Activated CD8-positive, alpha-beta T cell treated with anti-CD3 and anti-CD28 coated beads for 36 hours (primary cell): ENCODE measurements at regions of chr10 and their contacts with region 1.

Region 1: GRCh38 chr10:22988581-22989360 is 60.9 kb downstream of the ARMC3 start:
- DNase-seq: peak; percentile 79
- ATAC-seq: peak; percentile 80
- H3K4me3 Mint-ChIP-seq: no peak overlapping the region
- H3K27ac Mint-ChIP-seq: no peak overlapping the region
- H3K4me1 Mint-ChIP-seq: peaks cover 18% of the 10 kb centered on the region
- H3K27me3 Mint-ChIP-seq: no peaks in the 10 kb centered on the region
- CTCF ChIP-seq: peak; percentile 94

Region 2: GRCh38 chr10:21993360-21994001 is 995.3 kb before region 1 on chr10:
- CTCF ChIA-PET with region 1: interaction called, 35 read pairs
- POLR2A ChIA-PET with region 1: no interaction called
- intact Hi-C with region 1: no loop called
- DNase-seq: no peak
- ATAC-seq: peak; percentile 10
- H3K4me3 Mint-ChIP-seq: no peak overlapping the region
- H3K27ac Mint-ChIP-seq: no peak overlapping the region
- H3K4me1 Mint-ChIP-seq: peaks cover 16% of the 10 kb centered on the region
- H3K27me3 Mint-ChIP-seq: no peaks in the 10 kb centered on the region
- CTCF ChIP-seq: peak; percentile 72

Region 3: DNA sequence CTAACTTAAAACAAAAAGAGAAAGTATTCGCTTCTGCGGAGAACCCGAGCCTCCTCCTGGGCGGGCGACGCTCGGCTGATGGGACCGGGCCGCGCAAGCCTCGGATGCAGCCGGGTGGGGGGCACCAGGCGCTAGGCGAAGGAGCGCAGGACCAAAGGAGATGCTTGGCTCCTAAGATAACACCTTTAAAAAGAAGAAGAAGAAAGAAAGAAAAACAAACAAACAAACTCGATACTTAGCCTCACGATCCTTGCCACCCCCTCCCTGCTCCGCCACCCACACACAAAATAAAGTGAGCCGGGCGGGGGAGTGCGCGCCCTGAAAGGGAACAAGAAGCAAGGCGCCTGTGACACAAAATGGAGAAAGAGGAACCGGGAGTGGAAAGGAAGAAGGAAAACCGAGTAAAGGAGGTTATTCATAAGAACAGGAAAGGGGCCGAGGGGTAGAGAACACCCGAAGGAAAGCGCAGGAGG is 737.0 kb before region 1 on chr10:
- CTCF ChIA-PET with region 1: no interaction called
- POLR2A ChIA-PET with region 1: interaction called, 3 read pairs
- intact Hi-C with region 1: loop called (anchors 10 kb)
- DNase-seq: peak; percentile 74
- ATAC-seq: peak; percentile 37
- H3K4me3 Mint-ChIP-seq: peak overlapping the region; percentile 90
- H3K27ac Mint-ChIP-seq: peak overlapping the region; percentile 98
- H3K4me1 Mint-ChIP-seq: peaks cover 36% of the 10 kb centered on the region
- H3K27me3 Mint-ChIP-seq: peaks cover 15% of the 10 kb centered on the region
- CTCF ChIP-seq: no peak

Region 4: GRCh38 chr10:22443175-22443901 is 545.4 kb before region 1 on chr10:
- CTCF ChIA-PET with region 1: interaction called, 3 read pairs
- POLR2A ChIA-PET with region 1: no interaction called
- intact Hi-C with region 1: loop called (anchors 10 kb)
- DNase-seq: no peak
- ATAC-seq: no peak
- H3K4me3 Mint-ChIP-seq: no peak overlapping the region
- H3K27ac Mint-ChIP-seq: no peak overlapping the region
- H3K4me1 Mint-ChIP-seq: peaks cover 14% of the 10 kb centered on the region
- H3K27me3 Mint-ChIP-seq: peaks cover 2% of the 10 kb centered on the region
- CTCF ChIP-seq: no peak

Region 5: GRCh38 chr10:22573820-22574569 is 414.8 kb before region 1 on chr10:
- CTCF ChIA-PET with region 1: interaction called, 54 read pairs
- POLR2A ChIA-PET with region 1: no interaction called
- intact Hi-C with region 1: loop called (anchors 5 kb)
- DNase-seq: peak; percentile 56
- ATAC-seq: peak; percentile 35
- H3K4me3 Mint-ChIP-seq: peak overlapping the region; percentile 42
- H3K27ac Mint-ChIP-seq: peak overlapping the region; percentile 86
- H3K4me1 Mint-ChIP-seq: peaks cover 66% of the 10 kb centered on the region
- H3K27me3 Mint-ChIP-seq: no peaks in the 10 kb centered on the region
- CTCF ChIP-seq: peak; percentile 68

Region 6: GRCh38 chr10:22648547-22648961 is 340.2 kb before region 1 on chr10:
- CTCF ChIA-PET with region 1: interaction called, 5 read pairs
- POLR2A ChIA-PET with region 1: no interaction called
- intact Hi-C with region 1: loop called (anchors 10 kb)
- DNase-seq: no peak
- ATAC-seq: no peak
- H3K4me3 Mint-ChIP-seq: peak overlapping the region; percentile 69
- H3K27ac Mint-ChIP-seq: peak overlapping the region; percentile 99
- H3K4me1 Mint-ChIP-seq: peaks cover 90% of the 10 kb centered on the region
- H3K27me3 Mint-ChIP-seq: no peaks in the 10 kb centered on the region
- CTCF ChIP-seq: no peak

Region 7: DNA sequence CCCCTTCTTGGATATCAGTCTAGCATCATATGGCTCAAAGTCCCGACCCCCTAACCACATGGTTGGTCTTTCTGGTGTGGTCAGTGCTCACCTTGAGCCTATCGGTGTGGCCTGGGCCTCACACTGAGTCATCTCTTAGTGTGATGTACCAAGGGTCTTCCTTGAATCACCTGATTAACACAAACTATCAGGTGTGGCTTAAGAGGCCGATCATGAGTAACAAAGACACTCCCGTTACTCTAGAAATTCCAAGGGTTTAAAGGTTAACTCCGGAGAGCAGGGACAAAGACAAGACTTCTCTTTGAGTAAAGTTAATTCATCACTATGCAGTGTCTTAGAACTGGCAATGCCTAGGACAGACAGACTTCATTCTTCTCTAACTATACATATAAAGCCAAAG is 113.2 kb before region 1 on chr10:
- CTCF ChIA-PET with region 1: no interaction called
- POLR2A ChIA-PET with region 1: no interaction called
- intact Hi-C with region 1: no loop called
- DNase-seq: no peak
- ATAC-seq: no peak
- H3K4me3 Mint-ChIP-seq: no peak overlapping the region
- H3K27ac Mint-ChIP-seq: no peak overlapping the region
- H3K4me1 Mint-ChIP-seq: peaks cover 8% of the 10 kb centered on the region
- H3K27me3 Mint-ChIP-seq: no peaks in the 10 kb centered on the region
- CTCF ChIP-seq: no peak

Region 8: DNA sequence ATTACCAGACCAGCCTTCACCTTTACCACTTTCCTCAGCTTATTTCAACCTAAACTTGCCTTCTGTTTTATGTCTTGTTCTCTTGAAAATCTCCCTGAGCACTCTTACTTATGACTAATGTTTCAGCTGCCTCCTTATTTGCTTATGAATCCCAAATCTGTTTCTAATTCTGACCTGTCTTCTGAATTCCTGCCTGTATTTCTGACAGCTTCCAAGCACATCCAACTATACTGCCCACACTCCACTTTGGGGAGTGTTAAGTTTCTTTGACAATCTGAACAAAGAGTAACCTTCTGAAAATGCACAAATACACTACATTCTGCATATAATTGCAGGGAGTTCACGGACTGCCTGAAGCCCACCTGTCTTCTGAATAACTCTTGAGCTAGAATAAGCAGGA is 12.2 kb before region 1 on chr10:
- CTCF ChIA-PET with region 1: interaction called, 17 read pairs
- POLR2A ChIA-PET with region 1: no interaction called
- intact Hi-C with region 1: no loop called
- DNase-seq: no peak
- ATAC-seq: no peak
- H3K4me3 Mint-ChIP-seq: no peak overlapping the region
- H3K27ac Mint-ChIP-seq: no peak overlapping the region
- H3K4me1 Mint-ChIP-seq: no peaks in the 10 kb centered on the region
- H3K27me3 Mint-ChIP-seq: no peaks in the 10 kb centered on the region
- CTCF ChIP-seq: no peak